CD8-positive, alpha-beta memory T cell (primary cell): ENCODE measurements at regions of chr20 and their contacts with region 1.

Region 1: GRCh38 chr20:35741892-35742740 is at the start of gene RBM39:
- DNase-seq: peak; percentile 98 to 100 (median 99)
- H3K4me3 ChIP-seq: peak within 1 kb of the TSS; percentile 91
- H3K4me3 Mint-ChIP-seq: peak within 1 kb of the TSS; percentile 95 to 100 (median 99)
- H3K27ac ChIP-seq: peak within 1 kb of the TSS; percentile 99
- H3K27ac Mint-ChIP-seq: peak within 1 kb of the TSS; percentile 97 to 100 (median 100)
- H3K4me1 ChIP-seq: peaks cover 50% of the 10 kb centered on the region
- H3K4me1 Mint-ChIP-seq: peaks cover 46 to 60% (median 55%) of the 10 kb centered on the region in 3 donors
- H3K27me3 ChIP-seq: no peaks in the 10 kb centered on the region
- H3K27me3 Mint-ChIP-seq: peaks cover 0 to 5% of the 10 kb centered on the region in 2 donors
- total RNA-seq, gene RBM39: 349 to 352 TPM

Region 2: GRCh38 chr20:35619196-35620095 is 122.7 kb before region 1 on chr20:
- CTCF ChIA-PET with region 1: interaction called, 11 read pairs
- POLR2A ChIA-PET with region 1: interaction called, 15 read pairs
- DNase-seq: peak; percentile 64 to 78 (median 74)
- H3K4me3 ChIP-seq: peak overlapping the region; percentile 66
- H3K4me3 Mint-ChIP-seq: peak overlapping the region; percentile 83 to 95 (median 92)
- H3K27ac ChIP-seq: no peak overlapping the region
- H3K27ac Mint-ChIP-seq: peak overlapping the region; percentile 78 to 98 (median 83)
- H3K4me1 ChIP-seq: peaks cover 26% of the 10 kb centered on the region
- H3K4me1 Mint-ChIP-seq: peaks cover 25 to 49% (median 32%) of the 10 kb centered on the region in 3 donors
- H3K27me3 ChIP-seq: no peaks in the 10 kb centered on the region
- H3K27me3 Mint-ChIP-seq: peaks cover 0 to 8% of the 10 kb centered on the region in 2 donors

Region 3: GRCh38 chr20:35664544-35665221 is 77.4 kb before region 1 on chr20 and contains the starts of genes CPNE1 and RBM12:
- CTCF ChIA-PET with region 1: interaction called, 5 read pairs
- POLR2A ChIA-PET with region 1: interaction called, 28 read pairs
- DNase-seq: peak; percentile 88 to 96 (median 93)
- H3K4me3 ChIP-seq: peak within 1 kb of the TSS; percentile 95
- H3K4me3 Mint-ChIP-seq: peak within 1 kb of the TSS; percentile 86 to 98 (median 96)
- H3K27ac ChIP-seq: peak within 1 kb of the TSS; percentile 98
- H3K27ac Mint-ChIP-seq: peak within 1 kb of the TSS; percentile 94 to 100 (median 99)
- H3K4me1 ChIP-seq: peaks cover 41% of the 10 kb centered on the region
- H3K4me1 Mint-ChIP-seq: peaks cover 47 to 49% (median 49%) of the 10 kb centered on the region in 3 donors
- H3K27me3 ChIP-seq: no peaks in the 10 kb centered on the region
- H3K27me3 Mint-ChIP-seq: no peaks in the 10 kb centered on the region
- total RNA-seq, gene CPNE1: 295 to 305 TPM
- total RNA-seq, gene RBM12: 103 to 110 TPM

Region 4: GRCh38 chr20:35699127-35699975 is 42.8 kb before region 1 on chr20 and contains the starts of genes NFS1 and ROMO1:
- CTCF ChIA-PET with region 1: interaction called, 5 read pairs
- POLR2A ChIA-PET with region 1: interaction called, 19 read pairs
- DNase-seq: peak; percentile 81 to 92 (median 82)
- H3K4me3 ChIP-seq: peak within 1 kb of the TSS; percentile 93
- H3K4me3 Mint-ChIP-seq: peak within 1 kb of the TSS; percentile 87 to 96 (median 94)
- H3K27ac ChIP-seq: peak within 1 kb of the TSS; percentile 94
- H3K27ac Mint-ChIP-seq: peak within 1 kb of the TSS; percentile 92 to 98 (median 97)
- H3K4me1 ChIP-seq: peaks cover 21% of the 10 kb centered on the region
- H3K4me1 Mint-ChIP-seq: peaks cover 34 to 59% (median 58%) of the 10 kb centered on the region in 3 donors
- H3K27me3 ChIP-seq: no peaks in the 10 kb centered on the region
- H3K27me3 Mint-ChIP-seq: peaks cover 0 to 2% of the 10 kb centered on the region in 2 donors
- total RNA-seq, gene NFS1: 36.4 to 37.7 TPM
- total RNA-seq, gene ROMO1: 108 to 117 TPM

Region 5: GRCh38 chr20:35762481-35763245 is 20.5 kb after region 1 on chr20:
- CTCF ChIA-PET with region 1: interaction called, 90 read pairs
- POLR2A ChIA-PET with region 1: interaction called, 337 read pairs
- DNase-seq: no peak
- H3K4me3 ChIP-seq: no peak overlapping the region
- H3K4me3 Mint-ChIP-seq: no peak overlapping the region
- H3K27ac ChIP-seq: no peak overlapping the region
- H3K27ac Mint-ChIP-seq: peak overlapping the region in 5 of 8 donors; percentile 16 to 85 (median 74)
- H3K4me1 ChIP-seq: peaks cover 30% of the 10 kb centered on the region
- H3K4me1 Mint-ChIP-seq: peaks cover 14 to 25% (median 17%) of the 10 kb centered on the region in 3 donors
- H3K27me3 ChIP-seq: no peaks in the 10 kb centered on the region
- H3K27me3 Mint-ChIP-seq: no peaks in the 10 kb centered on the region

Region 6: DNA sequence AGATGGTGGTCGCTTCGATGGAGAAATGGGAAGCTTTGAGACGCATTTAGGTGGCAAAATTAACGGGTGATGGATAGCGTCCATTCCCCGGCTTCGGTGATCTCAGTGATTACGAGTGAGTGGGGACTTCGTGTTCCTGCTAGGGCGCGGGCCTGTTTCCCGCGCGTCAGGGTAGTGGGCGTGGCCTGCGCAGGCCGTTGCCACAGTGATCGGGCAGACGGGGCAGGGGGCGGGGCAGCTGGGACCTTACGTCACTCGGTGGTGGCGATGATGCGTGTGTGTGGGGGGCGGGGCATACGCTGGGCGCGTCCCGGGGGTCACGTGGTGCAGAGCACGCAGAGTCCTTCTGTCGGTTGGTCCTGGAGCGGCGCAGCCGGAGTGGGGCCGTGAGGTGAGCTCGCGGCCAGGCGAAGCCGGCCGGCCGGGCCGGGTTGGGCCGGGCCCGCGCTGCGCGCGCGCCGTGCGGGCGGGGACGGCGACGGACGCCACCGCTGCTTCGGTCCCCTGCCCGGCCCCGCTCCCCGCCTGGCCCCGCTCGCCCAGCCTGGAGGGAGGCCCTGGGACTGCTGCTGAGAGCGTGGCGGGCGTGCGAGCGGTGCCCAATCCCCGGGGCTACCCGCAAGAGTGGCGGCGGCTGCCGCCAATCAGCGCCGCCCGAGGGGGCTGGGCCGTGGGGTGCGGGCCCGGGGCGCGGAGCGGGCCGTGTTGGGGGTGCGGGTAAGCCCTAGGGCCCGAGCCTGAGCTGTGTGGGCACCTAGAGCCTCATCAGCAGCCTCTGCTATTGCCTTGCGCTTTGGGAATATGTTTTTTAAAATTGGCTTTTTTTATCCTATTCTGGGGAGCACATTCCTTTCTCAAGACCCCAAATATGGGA is 29.8 kb after region 1 on chr20 and contains the start of gene PHF20:
- CTCF ChIA-PET with region 1: interaction called, 90 read pairs
- POLR2A ChIA-PET with region 1: interaction called, 337 read pairs
- DNase-seq: peak; percentile 99 to 100 (median 100)
- H3K4me3 ChIP-seq: peak within 1 kb of the TSS; percentile 84
- H3K4me3 Mint-ChIP-seq: peak within 1 kb of the TSS; percentile 84 to 94 (median 86)
- H3K27ac ChIP-seq: peak within 1 kb of the TSS; percentile 95
- H3K27ac Mint-ChIP-seq: peak within 1 kb of the TSS; percentile 98 to 100 (median 100)
- H3K4me1 ChIP-seq: peaks cover 90% of the 10 kb centered on the region
- H3K4me1 Mint-ChIP-seq: peaks cover 68 to 90% (median 79%) of the 10 kb centered on the region in 3 donors
- H3K27me3 ChIP-seq: no peaks in the 10 kb centered on the region
- H3K27me3 Mint-ChIP-seq: peaks cover 0 to 3% of the 10 kb centered on the region in 2 donors
- total RNA-seq, gene PHF20: 53.9 to 54.3 TPM

Region 7: GRCh38 chr20:35837577-35838198 is 95.6 kb after region 1 on chr20:
- CTCF ChIA-PET with region 1: no interaction called
- POLR2A ChIA-PET with region 1: no interaction called
- DNase-seq: no peak
- H3K4me3 ChIP-seq: no peak overlapping the region
- H3K4me3 Mint-ChIP-seq: no peak overlapping the region
- H3K27ac ChIP-seq: no peak overlapping the region
- H3K27ac Mint-ChIP-seq: peak overlapping the region in 7 of 8 donors; percentile 12 to 83 (median 65)
- H3K4me1 ChIP-seq: peaks cover 18% of the 10 kb centered on the region
- H3K4me1 Mint-ChIP-seq: peaks cover 37 to 67% (median 60%) of the 10 kb centered on the region in 3 donors
- H3K27me3 ChIP-seq: no peaks in the 10 kb centered on the region
- H3K27me3 Mint-ChIP-seq: peaks cover 0 to 2% of the 10 kb centered on the region in 2 donors

Region 8: GRCh38 chr20:35954200-35954906 is 212.2 kb after region 1 on chr20 and contains the start of gene SCAND1:
- CTCF ChIA-PET with region 1: interaction called, 18 read pairs
- POLR2A ChIA-PET with region 1: interaction called, 40 read pairs
- DNase-seq: peak; percentile 94 to 99 (median 97)
- H3K4me3 ChIP-seq: peak within 1 kb of the TSS; percentile 83
- H3K4me3 Mint-ChIP-seq: peak within 1 kb of the TSS; percentile 97 to 100 (median 99)
- H3K27ac ChIP-seq: peak within 1 kb of the TSS; percentile 97
- H3K27ac Mint-ChIP-seq: peak within 1 kb of the TSS; percentile 94 to 100 (median 100)
- H3K4me1 ChIP-seq: peaks cover 27% of the 10 kb centered on the region
- H3K4me1 Mint-ChIP-seq: peaks cover 15 to 37% (median 26%) of the 10 kb centered on the region in 3 donors
- H3K27me3 ChIP-seq: no peaks in the 10 kb centered on the region
- H3K27me3 Mint-ChIP-seq: peaks cover 0 to 3% of the 10 kb centered on the region in 2 donors
- total RNA-seq, gene SCAND1: 50.8 to 55.8 TPM

Region 9: DNA sequence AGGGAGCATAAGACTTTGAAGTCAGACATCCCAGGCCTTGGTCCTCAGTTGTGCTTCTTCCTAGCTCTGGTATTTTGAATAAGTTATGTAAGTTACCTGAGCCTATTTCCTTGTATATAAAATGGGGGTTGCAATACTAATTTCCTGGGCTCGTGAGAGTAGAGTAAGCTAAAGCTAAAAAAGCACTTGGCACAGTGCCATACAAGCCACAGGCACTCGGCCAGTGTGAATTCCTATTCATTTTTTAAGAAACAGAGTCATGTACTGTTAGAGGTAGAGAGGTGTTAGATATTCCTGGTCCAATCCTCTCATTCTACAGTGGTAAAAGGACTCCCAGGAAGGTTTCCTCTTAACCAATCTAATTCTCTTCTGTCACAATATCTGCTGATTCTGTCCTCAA is 332.9 kb after region 1 on chr20:
- CTCF ChIA-PET with region 1: no interaction called
- POLR2A ChIA-PET with region 1: no interaction called
- DNase-seq: no peak
- H3K4me3 ChIP-seq: no peak overlapping the region
- H3K4me3 Mint-ChIP-seq: no peak overlapping the region
- H3K27ac ChIP-seq: no peak overlapping the region
- H3K27ac Mint-ChIP-seq: no peak overlapping the region
- H3K4me1 ChIP-seq: no peaks in the 10 kb centered on the region
- H3K4me1 Mint-ChIP-seq: peaks cover 0 to 5% (median 0%) of the 10 kb centered on the region in 3 donors
- H3K27me3 ChIP-seq: no peaks in the 10 kb centered on the region
- H3K27me3 Mint-ChIP-seq: peaks cover 10 to 42% of the 10 kb centered on the region in 2 donors